RWPE1 (cell line): ENCODE measurements at regions of chr6 and their contacts with region 1.

Region 1: GRCh38 chr6:45942953-45943352 is 72.7 kb downstream of the CLIC5 start:
- DNase-seq: no peak
- H3K27ac ChIP-seq: no peak overlapping the region
- CTCF ChIP-seq: no peak

Region 2: GRCh38 chr6:45930420-45931040 is 12.4 kb before region 1 on chr6:
- CTCF ChIA-PET with region 1: interaction called, 10 read pairs
- POLR2A ChIA-PET with region 1: no interaction called
- DNase-seq: peak; percentile 73
- H3K27ac ChIP-seq: no peak overlapping the region
- CTCF ChIP-seq: peak; percentile 92